ENCODE measurements at regions of chrX and their contacts with region 1.

Region 1: GRCh38 chrX:115560978-115561604 is at the start of gene PLS3:
- DNase-seq: peak; percentile 80 to 87
- ATAC-seq: peak; percentile 79 to 90 (median 86)
- H3K4me3 ChIP-seq: peak within 1 kb of the TSS; percentile 75
- H3K27ac ChIP-seq: peak within 1 kb of the TSS; percentile 81
- H3K4me1 ChIP-seq: no peaks in the 10 kb centered on the region
- H3K27me3 ChIP-seq: peaks cover 0 to 75% (median 0%) of the 10 kb centered on the region in 3 donors
- CTCF ChIP-seq: no peak
- total RNA-seq, gene PLS3: 14.4 to 31.3 (median 21.6) TPM

Region 2: GRCh38 chrX:115602729-115603389 is 41.8 kb after region 1 on chrX:
- intact Hi-C with region 1: loop called in 1 of 2 experiments (anchors 5 kb)
- DNase-seq: no peak
- ATAC-seq: peak; percentile 66 to 90 (median 82)
- H3K4me3 ChIP-seq: no peak overlapping the region
- H3K27ac ChIP-seq: peak overlapping the region; percentile 51
- H3K4me1 ChIP-seq: no peaks in the 10 kb centered on the region
- H3K27me3 ChIP-seq: peaks cover 0 to 22% (median 0%) of the 10 kb centered on the region in 3 donors
- CTCF ChIP-seq: no peak

Region 3: GRCh38 chrX:115642895-115643530 is 81.9 kb after region 1 on chrX:
- intact Hi-C with region 1: loop called in 1 of 2 experiments (anchors 5 kb)
- DNase-seq: no peak
- ATAC-seq: peak in 3 of 4 donors; percentile 48 to 54 (median 50)
- H3K4me3 ChIP-seq: no peak overlapping the region
- H3K27ac ChIP-seq: no peak overlapping the region
- H3K4me1 ChIP-seq: no peaks in the 10 kb centered on the region
- H3K27me3 ChIP-seq: peaks cover 0 to 12% (median 0%) of the 10 kb centered on the region in 3 donors
- CTCF ChIP-seq: peak; percentile 99